GM12878 (cell line): ENCODE measurements at regions of chr14 and their contacts with region 1.

Region 1: DNA sequence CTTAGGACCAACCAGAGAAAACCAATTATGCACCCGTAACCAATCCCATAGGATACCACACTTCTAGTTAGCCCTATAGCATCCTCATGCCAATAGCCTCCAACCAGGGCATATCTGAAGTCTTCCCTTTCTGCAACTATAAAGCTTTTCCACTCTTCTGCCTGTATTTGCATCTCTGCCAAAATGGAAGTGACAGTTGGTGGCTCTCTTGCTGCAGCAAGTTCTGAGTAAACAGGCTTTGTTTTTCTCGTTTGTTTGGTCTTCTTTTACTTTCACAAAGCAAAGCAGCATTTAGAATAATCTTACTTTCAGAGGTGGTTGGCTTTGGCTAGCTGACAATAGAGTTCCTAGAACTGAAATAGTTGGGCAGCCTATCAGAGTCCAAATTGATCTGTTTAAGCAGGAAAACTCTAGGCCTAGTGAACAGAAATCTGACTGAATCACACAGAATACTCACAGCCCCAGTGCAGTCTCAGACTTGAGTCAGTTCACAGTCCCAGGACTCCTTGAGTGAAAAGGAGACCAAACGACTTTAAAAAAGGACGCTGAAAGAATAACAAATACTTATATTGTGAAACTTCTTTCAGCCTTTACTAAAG is 1029.7 kb upstream of the LRFN5 start:
- DNase-seq: no peak
- ATAC-seq: no peak
- H3K4me3 ChIP-seq: no peak overlapping the region
- H3K27ac ChIP-seq: no peak overlapping the region
- H3K4me1 ChIP-seq: no peaks in the 10 kb centered on the region
- H3K27me3 ChIP-seq: no peaks in the 10 kb centered on the region
- CTCF ChIP-seq: no peak
- EP300 ChIP-seq: no peak
- POLR2A ChIP-seq: no peak
- RAD21 ChIP-seq: no peak

Region 2: DNA sequence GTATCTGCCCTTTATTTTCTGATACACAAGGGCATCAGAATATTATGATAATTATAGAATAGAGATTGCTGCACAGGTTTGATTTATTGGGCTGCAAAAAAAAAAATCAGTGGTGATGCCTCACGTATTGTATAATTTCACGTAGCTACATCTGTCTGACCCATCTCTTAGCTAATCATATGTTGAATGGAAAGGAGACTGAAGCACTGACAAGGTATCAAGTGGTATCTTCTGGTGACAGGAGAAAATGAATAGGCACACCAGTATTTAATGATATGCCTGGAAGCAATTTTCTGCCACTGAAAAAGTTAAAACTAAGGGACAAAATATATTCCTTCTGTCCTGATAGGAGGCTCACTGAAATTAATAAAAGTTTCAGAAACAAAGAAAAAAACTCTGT is 307.5 kb before region 1 on chr14:
- CTCF ChIA-PET with region 1: no interaction called
- POLR2A ChIA-PET with region 1: no interaction called
- RAD21 ChIA-PET with region 1: no interaction called
- SMC1A ChIA-PET with region 1: no interaction called
- in situ Hi-C with region 1: no loop called
- intact Hi-C with region 1: no loop called
- DNase-seq: no peak
- ATAC-seq: no peak
- H3K4me3 ChIP-seq: no peak overlapping the region
- H3K27ac ChIP-seq: no peak overlapping the region
- H3K4me1 ChIP-seq: no peaks in the 10 kb centered on the region
- H3K27me3 ChIP-seq: no peaks in the 10 kb centered on the region
- CTCF ChIP-seq: no peak
- EP300 ChIP-seq: no peak
- POLR2A ChIP-seq: no peak
- RAD21 ChIP-seq: no peak

Region 3: DNA sequence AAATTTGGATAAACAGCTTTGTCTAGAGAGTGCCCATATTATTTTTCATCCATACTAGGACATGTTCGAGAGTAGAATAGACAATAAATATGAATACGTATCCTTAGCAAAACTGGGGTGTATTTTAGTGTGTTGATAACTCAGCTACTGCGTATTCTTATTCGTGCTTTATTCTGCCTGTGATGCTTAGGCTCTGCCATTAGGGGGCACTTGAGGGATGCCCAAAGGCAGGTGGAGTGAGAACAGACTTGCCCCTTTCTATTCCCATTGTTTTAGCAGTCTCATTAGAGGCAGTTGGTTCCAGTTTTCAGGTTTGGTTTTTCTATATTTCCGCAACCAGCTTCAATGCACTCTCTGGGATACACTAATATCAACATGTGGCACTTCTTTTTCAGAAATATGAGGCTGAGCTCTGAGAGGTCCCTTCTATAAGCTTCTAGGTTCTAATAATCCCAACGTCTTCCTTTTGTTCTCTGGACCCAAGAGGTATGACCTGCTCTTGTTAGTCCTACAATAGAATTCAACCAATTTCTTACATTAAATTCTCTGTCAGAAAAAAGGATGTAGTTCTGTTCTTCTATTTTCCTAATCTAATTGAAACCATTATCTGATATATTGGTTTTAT is 159.1 kb before region 1 on chr14:
- CTCF ChIA-PET with region 1: no interaction called
- POLR2A ChIA-PET with region 1: no interaction called
- RAD21 ChIA-PET with region 1: no interaction called
- SMC1A ChIA-PET with region 1: no interaction called
- in situ Hi-C with region 1: no loop called
- intact Hi-C with region 1: no loop called
- DNase-seq: no peak
- ATAC-seq: peak; percentile 80
- H3K4me3 ChIP-seq: no peak overlapping the region
- H3K27ac ChIP-seq: no peak overlapping the region
- H3K4me1 ChIP-seq: no peaks in the 10 kb centered on the region
- H3K27me3 ChIP-seq: no peaks in the 10 kb centered on the region
- CTCF ChIP-seq: peak; percentile 51 to 63 (median 62)
- EP300 ChIP-seq: no peak
- POLR2A ChIP-seq: no peak
- RAD21 ChIP-seq: peak; percentile 69

Region 4: DNA sequence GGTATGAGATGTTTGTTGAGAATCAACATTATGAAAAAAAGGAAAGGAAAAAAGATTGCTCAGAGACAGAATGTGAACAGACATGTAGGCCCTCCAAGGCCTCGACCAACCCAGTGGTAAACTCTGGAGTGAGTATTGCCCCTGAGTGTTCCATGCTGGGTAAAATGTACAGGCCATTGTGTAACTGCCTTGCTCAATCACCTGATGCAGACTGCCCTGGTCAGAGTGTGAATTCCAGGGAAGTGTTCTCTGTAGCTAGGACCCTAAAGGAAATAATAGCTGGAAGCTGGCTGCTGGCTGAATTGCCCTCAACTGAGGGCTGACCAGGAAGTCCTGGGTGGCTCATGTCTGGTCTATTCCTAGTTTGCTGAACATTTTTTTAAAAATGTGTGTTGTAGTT is 51.7 kb before region 1 on chr14:
- CTCF ChIA-PET with region 1: no interaction called
- POLR2A ChIA-PET with region 1: no interaction called
- RAD21 ChIA-PET with region 1: no interaction called
- SMC1A ChIA-PET with region 1: no interaction called
- in situ Hi-C with region 1: no loop called
- intact Hi-C with region 1: no loop called
- DNase-seq: no peak
- ATAC-seq: no peak
- H3K4me3 ChIP-seq: no peak overlapping the region
- H3K27ac ChIP-seq: no peak overlapping the region
- H3K4me1 ChIP-seq: no peaks in the 10 kb centered on the region
- H3K27me3 ChIP-seq: no peaks in the 10 kb centered on the region
- CTCF ChIP-seq: no peak
- EP300 ChIP-seq: no peak
- POLR2A ChIP-seq: no peak
- RAD21 ChIP-seq: no peak

Region 5: DNA sequence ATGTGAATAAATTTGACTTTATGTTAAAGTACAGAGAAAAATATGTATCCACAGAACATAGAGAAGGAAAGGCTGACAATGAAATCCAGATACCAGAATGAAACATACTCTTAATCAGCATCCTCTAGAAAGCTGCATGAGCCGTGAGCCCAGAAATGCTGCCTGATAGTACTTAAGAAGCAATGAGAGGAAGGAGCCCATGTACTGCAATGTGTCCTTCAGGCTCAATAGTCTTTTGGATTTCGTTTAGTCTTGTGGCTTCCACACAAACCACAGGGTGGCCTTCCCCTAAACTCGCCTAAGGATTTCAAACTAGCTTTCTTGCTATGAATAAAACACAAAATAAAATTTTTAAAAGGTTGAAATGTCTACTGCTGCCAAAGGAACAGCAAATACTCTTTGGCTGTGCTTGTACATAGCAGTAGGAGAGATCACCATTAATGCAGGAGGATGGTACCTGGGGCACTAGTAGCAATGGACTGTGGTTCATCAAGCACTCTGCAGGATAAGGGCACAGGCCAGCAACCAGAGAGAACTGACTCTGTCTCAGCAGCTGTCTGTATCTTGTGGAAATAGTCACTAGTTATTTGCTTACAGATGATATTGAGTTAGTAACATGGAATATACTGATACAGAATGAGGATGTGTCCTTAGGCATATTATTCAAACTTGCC is 41.4 kb after region 1 on chr14:
- CTCF ChIA-PET with region 1: no interaction called
- POLR2A ChIA-PET with region 1: no interaction called
- RAD21 ChIA-PET with region 1: no interaction called
- SMC1A ChIA-PET with region 1: no interaction called
- in situ Hi-C with region 1: no loop called
- intact Hi-C with region 1: no loop called
- DNase-seq: no peak
- ATAC-seq: no peak
- H3K4me3 ChIP-seq: no peak overlapping the region
- H3K27ac ChIP-seq: no peak overlapping the region
- H3K4me1 ChIP-seq: no peaks in the 10 kb centered on the region
- H3K27me3 ChIP-seq: no peaks in the 10 kb centered on the region
- CTCF ChIP-seq: no peak
- EP300 ChIP-seq: no peak
- POLR2A ChIP-seq: no peak
- RAD21 ChIP-seq: no peak

Region 6: DNA sequence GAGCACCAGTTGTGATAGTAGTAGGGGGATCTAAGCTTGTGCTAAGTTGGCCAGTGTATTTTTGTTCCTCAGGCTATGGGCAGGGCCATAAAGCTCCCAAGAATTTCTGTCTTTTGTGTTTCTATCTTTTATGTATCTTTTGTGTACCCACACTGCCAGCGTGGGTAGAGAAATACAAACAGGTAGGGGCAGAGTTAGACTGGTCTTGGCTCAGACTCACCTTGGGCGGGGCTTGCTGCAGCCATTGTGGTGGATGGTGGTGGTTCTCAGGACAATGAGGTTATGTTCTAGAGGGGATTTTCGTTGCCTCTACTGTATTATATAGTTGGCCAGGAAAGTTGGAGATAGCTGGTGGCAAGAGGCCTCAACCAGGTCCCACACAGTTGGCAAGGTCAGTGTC is 52.1 kb after region 1 on chr14:
- CTCF ChIA-PET with region 1: no interaction called
- POLR2A ChIA-PET with region 1: no interaction called
- RAD21 ChIA-PET with region 1: no interaction called
- SMC1A ChIA-PET with region 1: no interaction called
- in situ Hi-C with region 1: no loop called
- intact Hi-C with region 1: loop called (anchors 5 kb)
- DNase-seq: no peak
- ATAC-seq: no peak
- H3K4me3 ChIP-seq: no peak overlapping the region
- H3K27ac ChIP-seq: no peak overlapping the region
- H3K4me1 ChIP-seq: no peaks in the 10 kb centered on the region
- H3K27me3 ChIP-seq: no peaks in the 10 kb centered on the region
- CTCF ChIP-seq: no peak
- EP300 ChIP-seq: no peak
- POLR2A ChIP-seq: no peak
- RAD21 ChIP-seq: no peak